ENCODE measurements at regions of chr7 and their contacts with region 1.

Region 1: GRCh38 chr7:119397156-119397555 is 875.8 kb upstream of the KCND2 start:
- DNase-seq: no peak
- ATAC-seq: no peak
- H3K4me3 ChIP-seq: no peak overlapping the region
- H3K4me3 Mint-ChIP-seq: no peak overlapping the region
- H3K27ac ChIP-seq: no peak overlapping the region
- H3K27ac Mint-ChIP-seq: no peak overlapping the region
- H3K4me1 ChIP-seq: no peaks in the 10 kb centered on the region
- H3K4me1 Mint-ChIP-seq: no peaks in the 10 kb centered on the region
- H3K27me3 ChIP-seq: no peaks in the 10 kb centered on the region
- H3K27me3 Mint-ChIP-seq: no peaks in the 10 kb centered on the region
- CTCF ChIP-seq: no peak

Region 2: GRCh38 chr7:119515214-119515613 is 118.1 kb after region 1 on chr7:
- CTCF ChIA-PET with region 1: no interaction called
- POLR2A ChIA-PET with region 1: no interaction called
- intact Hi-C with region 1: loop called in 1 of 2 experiments (anchors 5 kb)
- DNase-seq: no peak
- ATAC-seq: no peak
- H3K4me3 ChIP-seq: no peak overlapping the region
- H3K4me3 Mint-ChIP-seq: no peak overlapping the region
- H3K27ac ChIP-seq: no peak overlapping the region
- H3K27ac Mint-ChIP-seq: no peak overlapping the region
- H3K4me1 ChIP-seq: no peaks in the 10 kb centered on the region
- H3K4me1 Mint-ChIP-seq: no peaks in the 10 kb centered on the region
- H3K27me3 ChIP-seq: no peaks in the 10 kb centered on the region
- H3K27me3 Mint-ChIP-seq: no peaks in the 10 kb centered on the region
- CTCF ChIP-seq: no peak